ENCODE measurements at regions of chr2 and their contacts with region 1.

Region 1: DNA sequence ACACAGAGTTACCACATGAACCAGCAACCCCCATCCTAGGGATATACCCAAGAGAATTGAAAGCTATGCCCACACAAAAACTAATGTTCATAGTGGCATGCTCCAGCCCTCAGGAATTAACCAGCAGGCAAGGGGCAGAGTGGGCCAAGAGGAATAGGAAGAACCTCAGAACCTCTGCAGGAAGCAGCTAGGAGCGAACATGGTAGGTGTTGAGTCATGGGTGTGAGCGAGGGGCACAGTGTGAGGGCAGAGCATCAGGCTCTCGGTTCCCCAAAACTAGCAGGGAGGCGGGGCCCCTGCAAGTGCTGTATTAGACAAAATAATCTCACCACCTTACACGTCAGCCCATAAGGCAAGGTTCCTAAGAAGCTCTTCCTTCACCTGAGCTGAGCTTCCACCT is 5.6 kb upstream of the RUFY4 start:
- DNase-seq: peak; percentile 87 to 92 (median 89)
- H3K4me3 ChIP-seq: peak overlapping the region in 1 of 3 experiments; percentile 57
- H3K4me3 Mint-ChIP-seq: peak overlapping the region; percentile 58 to 87
- H3K27ac ChIP-seq: peak overlapping the region; percentile 82 to 84
- H3K27ac Mint-ChIP-seq: peak overlapping the region; percentile 90 to 95 (median 93)
- H3K4me1 ChIP-seq: peaks cover 89 to 90% of the 10 kb centered on the region in 2 donors
- H3K4me1 Mint-ChIP-seq: peaks cover 83% of the 10 kb centered on the region
- H3K27me3 ChIP-seq: no peaks in the 10 kb centered on the region
- H3K27me3 Mint-ChIP-seq: peaks cover 0 to 3% (median 0%) of the 10 kb centered on the region in 3 donors
- CTCF ChIP-seq: no peak

Region 2: GRCh38 chr2:217953531-217953932 is 110.0 kb before region 1 on chr2:
- intact Hi-C with region 1: no loop called
- DNase-seq: no peak
- H3K4me3 ChIP-seq: no peak overlapping the region
- H3K4me3 Mint-ChIP-seq: no peak overlapping the region
- H3K27ac ChIP-seq: no peak overlapping the region
- H3K27ac Mint-ChIP-seq: no peak overlapping the region
- H3K4me1 ChIP-seq: peaks cover 4 to 7% of the 10 kb centered on the region in 2 donors
- H3K4me1 Mint-ChIP-seq: peaks cover 8% of the 10 kb centered on the region
- H3K27me3 ChIP-seq: no peaks in the 10 kb centered on the region
- H3K27me3 Mint-ChIP-seq: peaks cover 0 to 9% (median 1%) of the 10 kb centered on the region in 3 donors
- CTCF ChIP-seq: no peak

Region 3: GRCh38 chr2:218010140-218010983 is 53.1 kb before region 1 on chr2:
- intact Hi-C with region 1: loop called in 1 of 2 experiments (anchors 10 kb)
- DNase-seq: peak; percentile 27 to 54 (median 40)
- H3K4me3 ChIP-seq: peak overlapping the region; percentile 35 to 73 (median 39)
- H3K4me3 Mint-ChIP-seq: peak overlapping the region; percentile 73 to 87
- H3K27ac ChIP-seq: no peak overlapping the region
- H3K27ac Mint-ChIP-seq: no peak overlapping the region
- H3K4me1 ChIP-seq: peaks cover 21 to 36% of the 10 kb centered on the region in 2 donors
- H3K4me1 Mint-ChIP-seq: peaks cover 35% of the 10 kb centered on the region
- H3K27me3 ChIP-seq: peaks cover 3 to 24% of the 10 kb centered on the region in 2 donors
- H3K27me3 Mint-ChIP-seq: peaks cover 20 to 34% (median 28%) of the 10 kb centered on the region in 3 donors
- CTCF ChIP-seq: peak; percentile 62

Region 4: DNA sequence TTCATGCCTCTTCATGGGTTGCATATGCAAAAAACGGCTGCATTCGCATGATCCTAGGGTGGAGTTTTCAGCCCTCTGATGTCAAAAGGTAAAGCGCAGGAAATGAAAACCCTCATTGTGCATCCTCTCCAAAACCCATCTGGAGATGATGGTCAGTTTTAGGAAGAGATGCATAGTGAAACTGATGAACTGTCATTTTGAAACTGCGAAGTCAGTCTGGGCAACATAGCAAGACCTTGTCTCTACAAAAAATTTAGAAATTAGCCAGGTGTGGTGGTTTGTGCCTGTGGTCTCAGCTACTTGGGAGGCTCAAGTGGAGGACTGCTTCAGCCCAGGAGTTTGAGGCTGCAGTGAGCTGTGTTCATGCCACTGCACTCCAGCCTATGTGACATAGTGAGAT is 644.6 kb after region 1 on chr2:
- intact Hi-C with region 1: no loop called
- DNase-seq: no peak
- H3K4me3 ChIP-seq: no peak overlapping the region
- H3K4me3 Mint-ChIP-seq: no peak overlapping the region
- H3K27ac ChIP-seq: no peak overlapping the region
- H3K27ac Mint-ChIP-seq: no peak overlapping the region
- H3K4me1 ChIP-seq: peaks cover 26 to 27% of the 10 kb centered on the region in 2 donors
- H3K4me1 Mint-ChIP-seq: peaks cover 18% of the 10 kb centered on the region
- H3K27me3 ChIP-seq: no peaks in the 10 kb centered on the region
- H3K27me3 Mint-ChIP-seq: peaks cover 0 to 7% (median 1%) of the 10 kb centered on the region in 3 donors
- CTCF ChIP-seq: no peak